ENCODE measurements at regions of chr9 and their contacts with region 1.

Region 1: GRCh38 chr9:129626079-129626624 is at the start of gene NTMT1:
- DNase-seq: peak; percentile 92
- ATAC-seq: peak; percentile 70
- H3K4me3 Mint-ChIP-seq: peak within 1 kb of the TSS; percentile 80
- H3K27ac Mint-ChIP-seq: peak within 1 kb of the TSS; percentile 88
- H3K4me1 Mint-ChIP-seq: peaks cover 54% of the 10 kb centered on the region
- H3K27me3 Mint-ChIP-seq: peaks cover 5% of the 10 kb centered on the region
- total RNA-seq, gene NTMT1: 36.2 to 39.2 TPM

Region 2: DNA sequence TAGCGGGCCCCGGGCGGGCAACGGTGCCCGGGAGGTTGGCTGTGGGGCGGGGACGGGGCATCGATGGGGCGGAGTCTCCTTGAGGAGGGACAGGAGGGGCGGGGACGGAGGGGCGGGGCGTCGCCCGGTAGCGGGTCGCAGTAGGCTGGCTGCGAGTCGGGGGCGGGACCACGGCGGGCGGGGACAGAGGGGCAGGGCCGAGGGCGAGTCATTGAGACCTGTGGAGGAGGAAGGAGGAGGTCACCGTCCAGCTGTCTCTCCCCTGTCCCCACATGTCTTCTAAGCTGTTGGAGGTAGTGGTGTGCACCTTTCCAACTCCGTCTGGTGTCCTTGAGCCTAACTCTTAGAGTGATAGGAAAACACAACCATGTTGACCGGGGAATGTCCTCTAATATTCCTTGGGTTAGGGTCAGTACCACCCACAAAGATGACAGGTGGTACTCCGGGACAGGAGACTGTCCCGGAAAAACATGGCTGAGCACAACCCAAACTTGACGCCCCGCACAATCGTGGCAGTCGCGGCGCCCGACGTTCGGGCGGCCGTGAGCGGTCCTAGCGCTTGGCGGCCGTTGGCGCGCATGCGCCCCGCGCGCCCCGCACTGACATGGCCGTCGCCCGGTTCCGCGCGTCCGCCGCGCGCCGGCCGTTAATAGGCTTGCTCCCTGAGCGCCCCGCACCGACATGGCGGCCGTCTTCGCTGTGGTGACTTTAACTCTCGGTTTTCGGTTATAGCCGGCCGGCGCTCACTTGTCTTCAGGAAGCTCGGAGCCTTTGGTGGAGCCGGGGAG is 515.2 kb before region 1 on chr9 and contains the starts of genes CRAT and PTPA:
- CTCF ChIA-PET with region 1: interaction called, 11 read pairs
- POLR2A ChIA-PET with region 1: no interaction called
- DNase-seq: peak; percentile 97
- ATAC-seq: peak; percentile 92
- H3K4me3 Mint-ChIP-seq: peak within 1 kb of the TSS; percentile 96
- H3K27ac Mint-ChIP-seq: peak within 1 kb of the TSS; percentile 98
- H3K4me1 Mint-ChIP-seq: peaks cover 40% of the 10 kb centered on the region
- H3K27me3 Mint-ChIP-seq: peaks cover 4% of the 10 kb centered on the region
- total RNA-seq, gene CRAT: 21.9 to 22.2 TPM
- total RNA-seq, gene PTPA: 114 to 125 TPM

Region 3: DNA sequence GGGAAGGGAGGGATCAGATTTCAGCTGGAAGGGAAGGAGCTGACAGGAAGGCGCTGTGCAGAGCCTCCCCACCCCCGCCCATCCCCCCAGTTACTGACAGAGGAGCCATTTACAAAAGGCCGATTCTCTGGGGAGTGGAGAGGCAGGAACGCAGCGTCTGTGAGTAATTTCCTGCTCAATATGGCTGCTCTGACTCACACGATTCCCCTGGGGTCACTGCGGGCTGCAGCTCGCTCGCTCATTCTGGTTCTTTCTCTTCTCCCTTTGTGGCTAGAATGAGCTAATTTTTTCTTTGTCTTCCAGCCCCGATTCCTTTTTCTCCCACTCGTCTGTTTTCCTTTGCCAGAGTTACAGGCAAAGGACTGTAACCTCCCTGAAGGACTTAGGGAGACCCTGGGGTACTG is 486.2 kb before region 1 on chr9:
- CTCF ChIA-PET with region 1: interaction called, 176 read pairs
- POLR2A ChIA-PET with region 1: interaction called, 5 read pairs
- DNase-seq: peak; percentile 90
- ATAC-seq: peak; percentile 84
- H3K4me3 Mint-ChIP-seq: peak overlapping the region; percentile 75
- H3K27ac Mint-ChIP-seq: peak overlapping the region; percentile 93
- H3K4me1 Mint-ChIP-seq: peaks cover 50% of the 10 kb centered on the region
- H3K27me3 Mint-ChIP-seq: no peaks in the 10 kb centered on the region

Region 4: GRCh38 chr9:129604772-129605171 is 21.4 kb before region 1 on chr9:
- CTCF ChIA-PET with region 1: interaction called, 14 read pairs
- POLR2A ChIA-PET with region 1: no interaction called
- DNase-seq: no peak
- ATAC-seq: no peak
- H3K4me3 Mint-ChIP-seq: no peak overlapping the region
- H3K27ac Mint-ChIP-seq: peak overlapping the region; percentile 3
- H3K4me1 Mint-ChIP-seq: peaks cover 66% of the 10 kb centered on the region
- H3K27me3 Mint-ChIP-seq: peaks cover 3% of the 10 kb centered on the region

Region 5: DNA sequence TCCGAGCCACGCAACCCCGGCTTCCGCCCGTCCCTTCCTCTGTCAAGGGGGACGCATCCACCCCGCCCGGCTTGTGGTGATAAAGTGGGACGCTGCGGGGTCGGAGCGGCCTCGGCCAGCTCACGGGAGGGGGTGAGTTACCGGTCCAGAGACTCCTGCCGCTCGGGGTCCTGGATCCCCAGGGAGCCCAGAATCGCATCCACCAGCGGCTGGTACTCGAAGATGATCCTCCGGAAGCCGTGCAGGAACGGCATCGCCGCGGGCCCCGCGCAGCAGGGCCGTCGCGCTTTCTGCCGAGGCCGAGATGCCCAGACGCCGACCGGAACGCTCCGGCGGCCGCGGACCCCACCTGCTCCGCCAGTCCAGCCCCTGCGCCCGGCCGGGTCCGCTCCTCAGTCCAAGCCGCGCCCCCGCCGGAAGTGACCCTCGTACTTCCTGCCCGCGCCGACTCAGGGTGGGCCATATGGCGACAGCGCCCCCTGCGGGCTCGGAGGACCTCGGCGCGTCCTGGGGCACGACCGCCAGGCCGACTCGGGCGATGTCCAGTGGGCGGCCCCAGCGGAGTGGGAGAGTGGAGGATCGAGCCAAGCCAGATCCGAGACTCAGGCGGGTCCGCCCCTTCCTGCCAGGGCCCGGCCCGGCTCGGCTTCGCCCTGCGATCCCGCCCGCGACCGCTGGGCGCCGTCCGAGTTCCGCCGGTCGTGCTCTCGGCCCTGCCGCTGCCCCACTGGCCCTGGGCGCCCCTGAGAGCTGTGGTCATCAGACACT is 15.8 kb after region 1 on chr9 and contains the start of gene ASB6:
- CTCF ChIA-PET with region 1: interaction called, 75 read pairs
- POLR2A ChIA-PET with region 1: interaction called, 4 read pairs
- DNase-seq: peak; percentile 94
- ATAC-seq: peak; percentile 93
- H3K4me3 Mint-ChIP-seq: peak within 1 kb of the TSS; percentile 83
- H3K27ac Mint-ChIP-seq: peak within 1 kb of the TSS; percentile 88
- H3K4me1 Mint-ChIP-seq: peaks cover 19% of the 10 kb centered on the region
- H3K27me3 Mint-ChIP-seq: no peaks in the 10 kb centered on the region
- total RNA-seq, gene ASB6: 25.4 to 27.7 TPM

Region 6: DNA sequence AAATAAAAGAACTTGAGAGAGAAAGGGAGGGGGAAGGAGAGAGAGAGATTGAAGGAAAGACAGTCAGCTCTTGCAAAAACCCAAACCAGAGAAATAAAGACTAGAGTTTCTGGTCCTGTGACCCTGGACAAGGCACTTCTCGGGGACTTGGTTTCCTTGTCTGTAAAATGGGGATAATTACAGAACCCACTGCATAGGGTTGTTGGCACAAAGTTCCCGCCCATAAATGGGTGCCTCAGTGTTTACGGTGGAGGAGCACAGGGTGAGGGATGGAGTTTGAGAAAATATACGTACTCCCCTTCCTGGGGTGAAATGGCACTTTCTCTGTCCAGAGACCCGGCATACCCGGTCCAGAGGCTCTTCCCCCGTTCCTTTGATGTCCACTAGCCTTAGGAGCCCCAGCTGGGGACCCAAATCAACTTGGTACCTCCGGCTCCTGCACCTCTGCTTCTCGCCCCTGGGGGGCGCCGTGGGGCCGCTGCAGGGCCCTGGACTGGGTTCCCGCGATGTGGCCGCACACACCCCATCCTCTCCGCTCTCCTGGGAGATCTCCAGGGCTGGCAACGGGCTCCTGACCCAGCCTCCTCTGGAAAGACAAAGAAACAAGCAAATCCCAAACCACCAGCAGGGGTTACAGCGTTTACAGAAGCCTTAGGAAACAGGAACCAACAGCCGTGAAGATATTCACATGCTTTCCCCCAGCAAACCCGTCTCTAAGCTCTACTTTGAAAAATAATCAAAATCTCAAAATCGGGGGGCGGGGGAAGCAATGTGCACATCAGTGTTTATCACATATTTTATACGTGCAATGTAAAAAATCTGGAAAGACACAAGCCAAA is 100.4 kb after region 1 on chr9:
- CTCF ChIA-PET with region 1: no interaction called
- POLR2A ChIA-PET with region 1: no interaction called
- DNase-seq: peak; percentile 69
- ATAC-seq: peak; percentile 94
- H3K4me3 Mint-ChIP-seq: no peak overlapping the region
- H3K27ac Mint-ChIP-seq: no peak overlapping the region
- H3K4me1 Mint-ChIP-seq: peaks cover 3% of the 10 kb centered on the region
- H3K27me3 Mint-ChIP-seq: peaks cover 17% of the 10 kb centered on the region

Region 7: DNA sequence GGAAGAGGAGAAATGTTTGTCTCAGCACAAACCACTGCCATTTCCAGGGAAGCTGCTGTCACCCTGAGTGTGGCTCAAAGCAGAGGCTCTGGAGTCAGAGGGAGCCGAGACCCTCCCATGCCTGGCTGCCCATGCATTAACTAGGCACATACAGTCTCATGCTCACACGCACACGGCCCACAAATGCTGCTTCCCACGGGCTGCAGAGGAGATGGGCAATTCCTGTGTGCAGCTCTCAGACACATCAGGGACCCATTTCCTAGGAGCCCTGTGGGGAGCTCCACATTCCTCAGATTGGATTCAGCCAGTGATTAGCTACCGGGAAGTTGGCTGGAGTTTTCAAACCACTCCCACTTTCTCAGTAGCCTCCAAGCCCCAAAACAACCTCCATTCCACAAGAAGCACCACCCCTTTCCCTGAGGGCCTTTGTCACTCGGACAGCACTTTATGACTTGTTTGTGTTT is 135.8 kb after region 1 on chr9:
- CTCF ChIA-PET with region 1: no interaction called
- POLR2A ChIA-PET with region 1: no interaction called
- DNase-seq: no peak
- ATAC-seq: no peak
- H3K4me3 Mint-ChIP-seq: no peak overlapping the region
- H3K27ac Mint-ChIP-seq: no peak overlapping the region
- H3K4me1 Mint-ChIP-seq: peaks cover 11% of the 10 kb centered on the region
- H3K27me3 Mint-ChIP-seq: peaks cover 8% of the 10 kb centered on the region